ENCODE measurements at regions of chr17 and their contacts with region 1.

Region 1: DNA sequence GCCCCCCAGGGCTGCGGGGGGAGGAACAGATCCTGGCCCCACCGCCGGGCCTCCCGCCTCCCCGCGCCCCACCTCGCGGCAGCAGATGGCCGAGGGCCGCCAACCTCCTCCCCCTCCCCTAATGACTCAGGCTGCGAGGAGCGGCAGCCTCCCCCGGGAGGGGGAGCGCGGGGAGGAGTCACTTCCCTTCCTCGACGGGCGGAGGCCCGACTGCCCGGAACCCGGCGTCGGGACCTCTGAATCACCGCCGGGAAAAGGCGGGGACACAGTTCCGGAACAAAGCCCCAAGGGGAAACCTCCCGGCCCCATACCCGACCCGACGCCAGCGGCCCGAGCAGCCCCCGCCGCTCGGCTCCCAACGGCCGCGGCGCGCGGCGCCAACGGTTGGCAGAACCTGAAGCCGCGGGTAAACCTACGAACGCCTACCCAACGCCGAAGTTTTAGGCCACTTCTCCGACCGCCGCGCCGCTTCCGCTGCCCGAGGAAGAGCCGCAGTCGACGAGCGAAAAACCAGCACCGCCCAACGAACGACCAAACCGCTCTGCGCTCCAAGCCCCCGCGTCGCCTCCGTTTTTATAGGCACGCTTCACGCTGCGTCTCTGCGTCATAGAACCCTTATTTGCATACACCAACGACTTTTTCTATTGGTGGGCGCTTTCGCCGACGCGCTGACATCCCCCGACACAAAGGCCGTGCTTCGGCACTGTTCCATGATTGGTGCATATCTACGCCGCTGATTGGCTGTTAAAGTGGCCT is 5.2 kb upstream of the UNK start:
- DNase-seq: peak; percentile 100
- ATAC-seq: peak; percentile 54
- H3K4me3 ChIP-seq: peak overlapping the region; percentile 81
- H3K27ac ChIP-seq: peak overlapping the region; percentile 88
- H3K4me1 ChIP-seq: peaks cover 46% of the 10 kb centered on the region
- H3K27me3 ChIP-seq: no peaks in the 10 kb centered on the region
- CTCF ChIP-seq: no peak; the same call in 1 of the 2 replicates

Region 2: GRCh38 chr17:75704963-75705875 is 74.2 kb before region 1 on chr17:
- CTCF ChIA-PET with region 1: no interaction called
- POLR2A ChIA-PET with region 1: no interaction called
- intact Hi-C with region 1: no loop called
- DNase-seq: no peak
- ATAC-seq: no peak
- H3K4me3 ChIP-seq: no peak overlapping the region
- H3K27ac ChIP-seq: no peak overlapping the region
- H3K4me1 ChIP-seq: peaks cover 45% of the 10 kb centered on the region
- H3K27me3 ChIP-seq: no peaks in the 10 kb centered on the region
- CTCF ChIP-seq: no peak

Region 3: DNA sequence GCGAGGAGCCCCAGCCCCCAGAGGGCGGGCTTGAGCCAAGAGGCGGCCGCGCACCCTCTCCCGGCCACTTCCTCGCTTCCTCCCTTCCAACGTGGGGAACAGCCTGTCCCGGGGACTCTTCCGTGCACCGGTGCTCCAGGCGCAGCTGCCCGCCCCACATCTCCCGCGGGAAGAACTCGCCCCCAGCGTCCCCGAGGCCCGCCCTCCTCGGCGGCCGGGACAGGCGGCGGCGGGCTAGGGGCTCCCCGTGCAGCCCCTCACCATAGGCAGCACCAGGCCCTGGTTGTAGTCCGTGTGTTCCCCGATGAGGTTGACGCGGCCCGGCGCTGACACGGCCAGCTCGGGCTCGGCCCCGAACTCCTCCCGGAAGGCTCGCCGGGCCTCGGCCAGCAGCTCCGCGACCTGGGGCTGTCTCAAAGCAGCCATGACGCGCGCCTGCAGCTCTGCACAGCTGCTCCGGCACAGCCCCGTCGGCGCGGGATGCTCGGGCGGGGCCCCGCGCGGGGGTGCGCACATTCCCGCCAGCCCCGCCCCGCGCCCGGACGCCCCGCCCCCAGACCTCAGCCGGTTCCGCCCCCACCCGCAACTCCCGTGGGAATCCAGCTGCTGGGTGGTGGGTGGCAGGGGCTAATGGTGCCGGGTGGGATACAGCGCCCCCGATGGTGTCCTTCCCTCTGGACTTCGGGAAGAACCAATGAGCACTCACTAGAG is 14.5 kb before region 1 on chr17 and contains the start of gene GALK1:
- CTCF ChIA-PET with region 1: interaction called, 12 read pairs
- POLR2A ChIA-PET with region 1: interaction called, 5 read pairs
- intact Hi-C with region 1: no loop called
- DNase-seq: peak; percentile 72
- ATAC-seq: peak; percentile 81
- H3K4me3 ChIP-seq: peak within 1 kb of the TSS; percentile 86
- H3K27ac ChIP-seq: peak within 1 kb of the TSS; percentile 10; the same call in 1 of the 2 replicates
- H3K4me1 ChIP-seq: peaks cover 16% of the 10 kb centered on the region
- H3K27me3 ChIP-seq: no peaks in the 10 kb centered on the region
- CTCF ChIP-seq: peak; percentile 86
- total RNA-seq, gene GALK1: 64.9 and 75.0 TPM in 2 replicates

Region 4: GRCh38 chr17:75845049-75845860 is 65.8 kb after region 1 on chr17:
- CTCF ChIA-PET with region 1: interaction called, 10 read pairs
- POLR2A ChIA-PET with region 1: interaction called, 10 read pairs
- intact Hi-C with region 1: loop called (anchors 5 kb)
- DNase-seq: peak; percentile 96
- ATAC-seq: peak; percentile 77
- H3K4me3 ChIP-seq: peak overlapping the region; percentile 49
- H3K27ac ChIP-seq: peak overlapping the region; percentile 96
- H3K4me1 ChIP-seq: peaks cover 39% of the 10 kb centered on the region
- H3K27me3 ChIP-seq: no peaks in the 10 kb centered on the region
- CTCF ChIP-seq: peak; percentile 89

Measured in PC-3 (cell line).